ENCODE measurements at regions of chr7 and their contacts with region 1.

Region 1: DNA sequence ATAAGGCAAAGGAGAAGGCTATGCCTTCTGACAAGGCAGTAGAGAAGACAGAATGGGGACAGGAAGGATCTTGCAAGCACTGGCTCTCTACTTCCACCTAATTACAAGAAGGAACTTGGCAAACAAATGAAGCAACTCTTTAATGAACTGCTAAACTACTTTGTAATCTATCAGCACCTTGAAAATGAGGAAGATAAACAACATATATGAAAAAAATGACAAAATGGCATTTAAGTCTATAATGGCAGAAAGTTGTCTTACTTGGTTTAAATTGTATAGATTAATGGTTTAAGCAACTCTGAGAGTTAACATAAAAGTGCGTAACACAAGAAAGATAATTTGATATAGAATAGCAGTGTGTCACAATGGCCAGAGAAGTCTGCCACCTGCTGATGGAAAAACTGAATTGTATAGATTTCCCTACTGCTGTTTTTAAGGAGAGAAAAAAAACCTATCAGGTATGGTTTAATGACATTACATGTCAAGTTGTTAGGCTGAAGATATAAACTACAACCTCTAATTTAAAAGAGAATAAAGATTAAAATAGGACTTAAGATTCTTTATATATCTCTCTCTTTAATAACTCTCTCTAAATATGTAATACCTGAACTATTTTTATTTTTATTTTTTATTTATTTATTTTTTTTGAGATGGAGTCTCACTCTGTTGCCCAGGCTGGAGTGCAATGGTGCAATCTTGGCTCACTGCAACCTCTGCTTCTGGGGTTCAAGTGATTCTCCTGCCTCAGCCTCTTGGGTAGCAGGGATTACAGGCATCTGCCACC is 11.8 kb downstream of the NT5C3A start:
- DNase-seq: peak in 19 of 35 experiments; percentile 2 to 74 (median 17)
- ATAC-seq: peak in 3 of 4 experiments; percentile 52 to 74 (median 62)
- H3K4me3 ChIP-seq: no peak overlapping the region
- H3K4me3 Mint-ChIP-seq: no peak overlapping the region
- H3K27ac ChIP-seq: no peak overlapping the region
- H3K27ac Mint-ChIP-seq: peak overlapping the region; percentile 38 to 41
- H3K4me1 ChIP-seq: peaks cover 9 to 27% of the 10 kb centered on the region in 2 experiments
- H3K4me1 Mint-ChIP-seq: peaks cover 53 to 71% (median 63%) of the 10 kb centered on the region in 3 donors
- H3K27me3 ChIP-seq: no peaks in the 10 kb centered on the region
- H3K27me3 Mint-ChIP-seq: no peaks in the 10 kb centered on the region

Region 2: GRCh38 chr7:32694182-32694581 is 356.5 kb before region 1 on chr7:
- CTCF ChIA-PET with region 1: no interaction called
- POLR2A ChIA-PET with region 1: no interaction called
- DNase-seq: no peak
- ATAC-seq: no peak
- H3K4me3 ChIP-seq: no peak overlapping the region
- H3K4me3 Mint-ChIP-seq: no peak overlapping the region
- H3K27ac ChIP-seq: no peak overlapping the region
- H3K27ac Mint-ChIP-seq: no peak overlapping the region
- H3K4me1 ChIP-seq: peaks cover 0 to 2% of the 10 kb centered on the region in 2 experiments
- H3K4me1 Mint-ChIP-seq: peaks cover 0 to 7% (median 6%) of the 10 kb centered on the region in 3 donors
- H3K27me3 ChIP-seq: no peaks in the 10 kb centered on the region
- H3K27me3 Mint-ChIP-seq: peaks cover 0 to 4% of the 10 kb centered on the region in 2 donors

Region 3: DNA sequence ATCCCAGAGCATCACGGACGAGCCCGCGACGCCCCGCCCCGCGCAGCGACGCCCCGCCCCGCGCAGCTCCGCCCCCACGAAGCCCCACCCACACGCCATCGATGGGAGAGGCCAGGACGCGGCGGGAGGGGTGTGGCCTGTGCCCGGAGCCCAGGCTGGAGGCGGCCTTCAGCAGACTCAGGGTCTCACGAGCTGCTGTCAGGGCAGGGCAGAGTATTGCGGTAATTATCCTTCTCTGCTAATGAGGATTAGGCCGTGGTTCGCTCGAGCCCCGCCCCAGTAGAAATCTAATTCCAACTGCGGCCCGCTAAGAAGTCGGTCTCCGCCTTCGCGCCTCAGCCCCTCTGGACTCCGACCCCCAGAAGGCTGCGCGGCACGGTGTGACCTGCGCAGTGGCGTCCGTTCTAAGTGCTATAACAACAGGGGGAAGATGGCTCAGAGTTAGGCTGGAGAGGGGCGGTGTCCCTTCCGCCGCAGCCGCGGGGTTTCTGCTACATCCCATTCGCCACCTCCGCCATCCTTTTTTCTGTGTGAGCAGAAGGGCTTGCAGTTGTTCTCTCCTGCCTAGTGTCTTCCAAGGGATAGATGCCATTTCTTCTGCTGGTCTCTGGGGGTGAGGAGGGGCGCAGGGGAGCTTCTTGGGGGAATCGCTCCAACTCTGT is 12.2 kb after region 1 on chr7:
- CTCF ChIA-PET with region 1: interaction called in 1 of 2 experiments, 15 read pairs
- POLR2A ChIA-PET with region 1: interaction called in 1 of 2 experiments, 4 read pairs
- DNase-seq: peak; percentile 86 to 96 (median 90)
- ATAC-seq: peak; percentile 90 to 96 (median 92)
- H3K4me3 ChIP-seq: peak overlapping the region; percentile 79 to 90
- H3K4me3 Mint-ChIP-seq: peak overlapping the region; percentile 94 to 97 (median 95)
- H3K27ac ChIP-seq: peak overlapping the region; percentile 67
- H3K27ac Mint-ChIP-seq: peak overlapping the region; percentile 95 to 96
- H3K4me1 ChIP-seq: peaks cover 16 to 26% of the 10 kb centered on the region in 2 experiments
- H3K4me1 Mint-ChIP-seq: peaks cover 44 to 45% (median 45%) of the 10 kb centered on the region in 3 donors
- H3K27me3 ChIP-seq: no peaks in the 10 kb centered on the region
- H3K27me3 Mint-ChIP-seq: peaks cover 0 to 3% of the 10 kb centered on the region in 2 donors